ENCODE measurements at regions of chr1 and their contacts with region 1.

Region 1: GRCh38 chr1:85240174-85240601 is 19.3 kb downstream of the C1orf52 start:
- DNase-seq: peak in 2 of 4 experiments; percentile 30 to 38
- ATAC-seq: peak; percentile 73
- H3K4me3 ChIP-seq: no peak overlapping the region
- H3K27ac ChIP-seq: no peak overlapping the region
- H3K4me1 ChIP-seq: peaks cover 0 to 22% of the 10 kb centered on the region in 2 experiments; a peak in 4 of 5 replicates
- H3K27me3 ChIP-seq: no peaks in the 10 kb centered on the region
- CTCF ChIP-seq: peak; percentile 43 to 70 (median 44); a peak in 5 of 6 replicates
- EP300 ChIP-seq: no peak
- POLR2A ChIP-seq: no peak
- RAD21 ChIP-seq: peak; percentile 63 to 79

Region 2: DNA sequence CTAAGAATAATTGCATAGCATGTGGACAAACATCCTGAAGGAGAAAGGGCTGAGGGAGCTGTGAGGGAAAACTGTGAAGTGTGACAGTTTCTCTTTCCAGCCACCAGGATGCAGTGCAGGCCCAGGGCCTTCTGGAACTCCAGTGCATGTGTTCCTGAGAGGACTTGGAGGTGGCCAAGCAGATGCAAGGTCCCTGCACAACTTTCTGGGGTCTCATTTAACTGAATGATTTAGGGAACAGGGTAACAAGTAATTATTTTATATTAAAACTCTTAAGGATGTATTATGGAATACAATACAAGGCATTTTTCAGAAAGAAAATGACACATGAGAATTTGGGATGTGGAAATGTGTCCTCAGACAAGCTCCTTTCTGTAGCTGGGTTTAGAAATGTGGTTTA is 130.7 kb before region 1 on chr1:
- CTCF ChIA-PET with region 1: interaction called, 10 read pairs
- POLR2A ChIA-PET with region 1: no interaction called
- in situ Hi-C with region 1: no loop called
- intact Hi-C with region 1: loop called (anchors 1 kb)
- DNase-seq: peak; percentile 23 to 76 (median 52)
- ATAC-seq: peak; percentile 100
- H3K4me3 ChIP-seq: no peak overlapping the region
- H3K27ac ChIP-seq: no peak overlapping the region
- H3K4me1 ChIP-seq: no peaks in the 10 kb centered on the region
- H3K27me3 ChIP-seq: peaks cover 0 to 6% of the 10 kb centered on the region in 2 experiments; a peak in 1 of 5 replicates
- CTCF ChIP-seq: peak; percentile 83 to 91 (median 90)
- EP300 ChIP-seq: no peak
- POLR2A ChIP-seq: no peak
- RAD21 ChIP-seq: peak; percentile 94 to 96

Region 3: DNA sequence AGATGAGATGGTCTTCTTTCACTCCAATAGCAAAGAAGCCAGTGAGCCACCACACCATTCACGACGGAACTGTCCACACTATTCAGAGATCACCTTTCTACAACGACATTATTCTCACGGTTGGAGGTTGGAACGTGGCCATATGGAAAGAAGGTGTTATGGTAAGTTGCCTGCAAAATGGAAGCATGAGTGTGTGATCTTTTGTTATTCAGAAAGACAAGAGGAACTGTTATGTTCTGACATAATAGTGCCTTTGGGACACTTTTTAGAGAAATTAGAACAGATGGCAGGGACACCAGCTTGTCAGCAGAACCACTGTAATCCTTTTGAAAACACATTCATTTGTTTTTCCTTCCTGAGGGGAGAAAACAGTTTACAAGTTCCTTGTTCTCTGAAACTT is 116.1 kb before region 1 on chr1:
- CTCF ChIA-PET with region 1: no interaction called
- POLR2A ChIA-PET with region 1: no interaction called
- in situ Hi-C with region 1: loop called (anchors 5 kb)
- intact Hi-C with region 1: no loop called
- DNase-seq: no peak
- ATAC-seq: no peak
- H3K4me3 ChIP-seq: no peak overlapping the region
- H3K27ac ChIP-seq: no peak overlapping the region
- H3K4me1 ChIP-seq: no peaks in the 10 kb centered on the region
- H3K27me3 ChIP-seq: peaks cover 3 to 13% of the 10 kb centered on the region in 2 experiments; a peak in 3 of 5 replicates
- CTCF ChIP-seq: no peak
- EP300 ChIP-seq: no peak
- POLR2A ChIP-seq: no peak
- RAD21 ChIP-seq: no peak

Region 4: DNA sequence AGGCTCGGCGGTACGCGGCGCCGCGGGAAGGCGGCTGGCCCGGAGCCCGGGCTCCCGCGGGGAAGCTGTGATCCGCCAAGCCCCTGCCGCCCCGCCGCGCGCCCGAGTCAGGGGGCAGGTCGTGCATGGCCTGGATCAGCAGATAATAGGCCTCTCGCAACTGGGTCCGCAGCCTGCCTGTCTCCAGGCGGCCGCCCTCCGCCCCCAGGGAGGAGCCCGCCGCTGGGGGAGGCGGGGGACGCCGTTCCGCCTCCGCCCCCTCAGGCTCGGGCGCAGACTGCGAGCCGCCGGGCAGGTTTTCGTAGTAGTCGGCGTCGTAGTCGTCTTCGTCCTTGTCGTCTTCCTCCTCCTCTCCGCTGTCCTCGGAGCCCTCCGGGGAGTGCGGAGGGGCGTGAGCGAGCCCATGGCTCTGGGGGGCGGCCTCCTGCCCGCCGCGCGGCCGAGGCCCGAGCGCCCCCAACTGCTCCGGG is 39.3 kb before region 1 on chr1 and contains the start of gene SYDE2:
- CTCF ChIA-PET with region 1: no interaction called
- POLR2A ChIA-PET with region 1: interaction called, 4 read pairs
- in situ Hi-C with region 1: no loop called
- intact Hi-C with region 1: loop called (anchors 5 kb)
- DNase-seq: peak; percentile 91 to 95 (median 92)
- ATAC-seq: peak; percentile 90
- H3K4me3 ChIP-seq: peak within 1 kb of the TSS; percentile 68
- H3K27ac ChIP-seq: peak within 1 kb of the TSS; percentile 90
- H3K4me1 ChIP-seq: peaks cover 3 to 17% of the 10 kb centered on the region in 2 experiments; a peak in 4 of 5 replicates
- H3K27me3 ChIP-seq: no peaks in the 10 kb centered on the region
- CTCF ChIP-seq: no peak
- EP300 ChIP-seq: no peak
- POLR2A ChIP-seq: peak; percentile 86
- RAD21 ChIP-seq: no peak
- polyA plus RNA-seq, gene SYDE2: 0.39 to 0.77 TPM

Region 5: GRCh38 chr1:85224734-85225623 is 15.2 kb before region 1 on chr1:
- CTCF ChIA-PET with region 1: no interaction called
- POLR2A ChIA-PET with region 1: interaction called, 14 read pairs
- in situ Hi-C with region 1: no loop called
- intact Hi-C with region 1: no loop called
- DNase-seq: peak; percentile 76 to 93 (median 84)
- ATAC-seq: peak; percentile 89
- H3K4me3 ChIP-seq: no peak overlapping the region
- H3K27ac ChIP-seq: peak overlapping the region; percentile 15
- H3K4me1 ChIP-seq: peaks cover 23 to 45% of the 10 kb centered on the region in 2 experiments
- H3K27me3 ChIP-seq: no peaks in the 10 kb centered on the region
- CTCF ChIP-seq: no peak
- EP300 ChIP-seq: peak; percentile 99
- POLR2A ChIP-seq: no peak
- RAD21 ChIP-seq: no peak

Region 6: DNA sequence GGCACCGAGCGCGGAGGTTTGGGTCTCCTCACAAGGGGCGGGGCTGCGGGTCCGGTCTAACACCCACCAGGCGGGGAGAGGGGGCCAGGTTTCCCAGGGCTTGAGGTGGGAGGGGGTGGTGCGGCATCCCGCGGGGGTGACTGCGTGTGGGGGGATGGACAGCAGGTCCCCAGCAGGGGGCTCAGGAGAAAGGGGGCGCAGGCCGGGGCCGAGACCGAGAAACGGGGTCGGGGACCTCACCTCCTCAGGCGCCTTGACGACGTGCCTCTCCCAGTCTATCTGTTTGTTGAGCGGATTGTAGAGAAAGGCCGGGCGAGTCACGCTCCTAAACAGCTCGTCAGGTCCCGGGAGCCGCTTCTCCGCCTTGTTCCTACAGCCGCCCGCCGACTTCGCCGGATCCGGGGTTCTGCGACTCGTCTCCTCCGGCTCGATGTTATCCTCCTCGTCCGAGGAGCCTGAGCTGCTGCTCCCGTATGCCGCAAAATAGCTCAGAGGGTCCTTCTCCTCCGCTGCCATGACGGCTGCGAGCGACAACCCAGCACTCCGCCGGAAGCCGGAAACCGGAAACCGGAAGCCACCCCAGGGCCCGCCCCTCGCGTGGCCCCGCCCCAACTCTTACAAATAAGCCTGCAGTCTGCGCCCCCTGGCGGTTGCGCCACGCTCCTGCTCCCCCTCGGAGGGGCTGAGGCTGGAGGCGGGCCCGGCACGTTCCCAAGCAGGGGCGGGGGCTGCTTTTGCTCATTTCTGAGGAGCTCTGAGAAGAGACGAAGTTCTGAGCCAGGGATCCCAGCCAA is 19.1 kb after region 1 on chr1 and contains the start of gene C1orf52:
- CTCF ChIA-PET with region 1: no interaction called
- POLR2A ChIA-PET with region 1: interaction called, 13 read pairs
- in situ Hi-C with region 1: no loop called
- intact Hi-C with region 1: no loop called
- DNase-seq: peak; percentile 91 to 96 (median 92)
- ATAC-seq: peak; percentile 97
- H3K4me3 ChIP-seq: peak within 1 kb of the TSS; percentile 93
- H3K27ac ChIP-seq: peak within 1 kb of the TSS; percentile 86
- H3K4me1 ChIP-seq: peaks cover 3 to 10% of the 10 kb centered on the region in 2 experiments; a peak in 4 of 5 replicates
- H3K27me3 ChIP-seq: no peaks in the 10 kb centered on the region
- CTCF ChIP-seq: peak; percentile 88 to 94 (median 94)
- EP300 ChIP-seq: no peak
- POLR2A ChIP-seq: peak; percentile 95
- RAD21 ChIP-seq: peak; percentile 77 to 88
- polyA plus RNA-seq, gene C1orf52: 17.0 to 22.5 TPM

Region 7: GRCh38 chr1:85681087-85681486 is 440.9 kb after region 1 on chr1:
- CTCF ChIA-PET with region 1: no interaction called
- POLR2A ChIA-PET with region 1: no interaction called
- in situ Hi-C with region 1: no loop called
- intact Hi-C with region 1: no loop called
- DNase-seq: no peak
- ATAC-seq: no peak
- H3K4me3 ChIP-seq: no peak overlapping the region
- H3K27ac ChIP-seq: no peak overlapping the region
- H3K4me1 ChIP-seq: no peaks in the 10 kb centered on the region
- H3K27me3 ChIP-seq: no peaks in the 10 kb centered on the region
- CTCF ChIP-seq: no peak
- EP300 ChIP-seq: no peak
- POLR2A ChIP-seq: no peak
- RAD21 ChIP-seq: no peak